Activated CD8-positive, alpha-beta T cell treated with anti-CD3 and anti-CD28 coated beads for 36 hours (primary cell): ENCODE measurements at regions of chr5 and their contacts with region 1.

Region 1: DNA sequence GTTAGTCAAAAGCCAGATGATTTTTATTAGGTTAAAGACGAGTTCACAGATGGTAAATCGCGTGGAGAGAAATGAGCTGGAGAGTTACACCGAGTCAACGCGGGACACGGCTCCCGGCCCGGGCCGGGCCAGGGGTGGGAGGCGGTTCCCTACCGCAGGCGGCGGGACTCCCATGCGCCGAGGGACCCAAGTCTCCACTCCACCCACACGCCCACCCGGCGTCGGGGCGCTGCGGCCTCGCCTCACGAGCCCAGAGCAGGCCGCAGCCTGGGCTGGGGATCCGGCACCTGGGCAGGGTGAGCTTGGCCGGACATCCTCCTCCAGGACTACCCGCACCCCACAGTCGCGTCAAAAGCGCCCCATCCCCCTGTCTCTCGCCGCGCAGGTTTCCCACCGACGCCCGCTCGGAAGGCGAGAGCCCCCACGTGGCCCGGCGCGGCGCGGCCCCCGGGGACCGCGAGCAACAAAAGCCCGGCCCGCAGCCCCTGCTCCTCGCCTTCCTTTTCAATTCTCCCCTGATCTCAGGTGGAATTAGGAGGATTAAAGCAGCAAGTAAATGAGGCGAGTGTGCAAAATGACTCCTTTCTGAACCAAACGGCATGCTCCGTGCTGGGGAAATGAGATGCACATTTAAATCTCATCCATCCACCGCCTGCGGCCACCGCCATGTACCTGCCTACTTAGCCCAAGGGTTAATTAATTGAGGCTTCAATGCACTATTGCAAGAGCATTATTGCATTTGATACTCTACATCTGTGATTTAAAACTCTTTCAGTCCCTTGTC is 196.5 kb upstream of the TBCA start:
- DNase-seq: peak; percentile 35
- ATAC-seq: peak; percentile 47
- H3K4me3 Mint-ChIP-seq: peak overlapping the region; percentile 49
- H3K27ac Mint-ChIP-seq: no peak overlapping the region
- H3K4me1 Mint-ChIP-seq: peaks cover 8% of the 10 kb centered on the region
- H3K27me3 Mint-ChIP-seq: peaks cover 56% of the 10 kb centered on the region
- CTCF ChIP-seq: peak; percentile 32

Region 2: GRCh38 chr5:77638763-77639671 is 333.6 kb before region 1 on chr5:
- CTCF ChIA-PET with region 1: interaction called, 3 read pairs
- POLR2A ChIA-PET with region 1: no interaction called
- intact Hi-C with region 1: loop called (anchors 5 kb)
- DNase-seq: peak; percentile 37
- ATAC-seq: peak; percentile 76
- H3K4me3 Mint-ChIP-seq: no peak overlapping the region
- H3K27ac Mint-ChIP-seq: no peak overlapping the region
- H3K4me1 Mint-ChIP-seq: peaks cover 22% of the 10 kb centered on the region
- H3K27me3 Mint-ChIP-seq: peaks cover 69% of the 10 kb centered on the region
- CTCF ChIP-seq: no peak

Region 3: GRCh38 chr5:77852514-77853352 is 119.9 kb before region 1 on chr5:
- CTCF ChIA-PET with region 1: no interaction called
- POLR2A ChIA-PET with region 1: no interaction called
- intact Hi-C with region 1: loop called (anchors 10 kb)
- DNase-seq: peak; percentile 56
- ATAC-seq: peak; percentile 75
- H3K4me3 Mint-ChIP-seq: peak overlapping the region; percentile 63
- H3K27ac Mint-ChIP-seq: no peak overlapping the region
- H3K4me1 Mint-ChIP-seq: peaks cover 11% of the 10 kb centered on the region
- H3K27me3 Mint-ChIP-seq: peaks cover 35% of the 10 kb centered on the region
- CTCF ChIP-seq: no peak

Region 4: DNA sequence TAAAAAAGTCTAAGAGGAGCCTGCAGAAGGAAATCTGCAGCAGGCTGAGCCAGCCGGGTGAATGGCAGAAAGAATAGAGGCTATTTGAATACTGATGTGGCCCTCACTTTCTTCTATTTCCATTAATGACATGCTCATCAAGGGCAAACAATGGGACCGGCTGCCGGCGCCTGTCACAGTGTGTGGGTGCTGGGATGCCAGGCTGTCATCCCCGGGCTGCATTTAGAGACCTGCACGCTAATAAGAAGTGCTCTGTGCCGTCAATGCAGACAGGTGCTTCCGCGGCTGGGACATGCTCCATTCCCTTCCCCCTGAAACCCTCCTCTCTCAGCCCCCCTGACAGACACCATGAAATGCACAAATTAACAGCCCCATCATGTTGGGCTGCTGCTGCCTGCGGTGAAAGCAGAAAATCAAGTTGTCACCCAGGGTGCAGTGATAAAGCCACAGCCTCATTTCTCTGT is 21.2 kb after region 1 on chr5:
- CTCF ChIA-PET with region 1: no interaction called
- POLR2A ChIA-PET with region 1: no interaction called
- intact Hi-C with region 1: no loop called
- DNase-seq: no peak
- ATAC-seq: no peak
- H3K4me3 Mint-ChIP-seq: no peak overlapping the region
- H3K27ac Mint-ChIP-seq: no peak overlapping the region
- H3K4me1 Mint-ChIP-seq: no peaks in the 10 kb centered on the region
- H3K27me3 Mint-ChIP-seq: no peaks in the 10 kb centered on the region
- CTCF ChIP-seq: no peak